PC-9 (cell line): ENCODE measurements at regions of chr16 and their contacts with region 1.

Region 1: GRCh38 chr16:12215277-12216105 is 239.0 kb downstream of the SNX29 start:
- DNase-seq: peak in 1 of 2 experiments; percentile 22
- H3K4me3 ChIP-seq: no peak overlapping the region
- H3K27ac ChIP-seq: no peak overlapping the region
- H3K4me1 ChIP-seq: no peaks in the 10 kb centered on the region
- H3K27me3 ChIP-seq: no peaks in the 10 kb centered on the region
- CTCF ChIP-seq: peak; percentile 31; the same call in 1 of the 2 replicates

Region 2: DNA sequence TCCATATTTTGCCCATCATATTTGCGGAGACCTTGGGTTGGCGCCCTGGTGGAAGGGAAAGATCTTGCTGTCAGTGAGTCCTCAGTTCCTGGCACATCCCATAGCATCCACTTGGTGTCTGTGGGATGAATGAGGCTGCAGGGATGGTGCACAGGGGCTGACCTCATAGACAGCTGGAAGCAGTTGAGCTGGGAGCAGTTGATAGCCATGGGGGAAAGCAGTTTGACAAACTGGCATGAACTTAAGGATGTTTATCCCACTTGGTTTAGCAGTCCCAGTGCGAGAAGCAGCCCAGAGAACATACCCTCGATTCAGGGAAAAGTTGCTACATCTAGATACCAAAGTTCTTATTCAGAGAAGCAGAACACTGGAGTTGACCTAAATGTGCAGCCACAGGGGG is 158.2 kb before region 1 on chr16:
- CTCF ChIA-PET with region 1: no interaction called
- POLR2A ChIA-PET with region 1: interaction called, 15 read pairs
- intact Hi-C with region 1: no loop called
- DNase-seq: no peak
- H3K4me3 ChIP-seq: no peak overlapping the region
- H3K27ac ChIP-seq: no peak overlapping the region
- H3K4me1 ChIP-seq: no peaks in the 10 kb centered on the region
- H3K27me3 ChIP-seq: no peaks in the 10 kb centered on the region
- CTCF ChIP-seq: no peak

Region 3: GRCh38 chr16:12170091-12171040 is 45.1 kb before region 1 on chr16:
- CTCF ChIA-PET with region 1: no interaction called
- POLR2A ChIA-PET with region 1: no interaction called
- intact Hi-C with region 1: no loop called
- DNase-seq: no peak
- H3K4me3 ChIP-seq: no peak overlapping the region
- H3K27ac ChIP-seq: no peak overlapping the region
- H3K4me1 ChIP-seq: no peaks in the 10 kb centered on the region
- H3K27me3 ChIP-seq: no peaks in the 10 kb centered on the region
- CTCF ChIP-seq: no peak